ENCODE measurements at regions of chr15 and their contacts with region 1.

Region 1: GRCh38 chr15:58331903-58332675 is 99.7 kb upstream of the LIPC start:
- DNase-seq: peak in 6 of 9 donors; percentile 17 to 85 (median 42)
- ATAC-seq: peak; percentile 93
- H3K4me3 ChIP-seq: no peak overlapping the region
- H3K4me3 Mint-ChIP-seq: peak overlapping the region; percentile 27 to 66 (median 46)
- H3K27ac ChIP-seq: no peak overlapping the region
- H3K27ac Mint-ChIP-seq: peak overlapping the region; percentile 60 to 89 (median 80)
- H3K4me1 ChIP-seq: peaks cover 13 to 23% of the 10 kb centered on the region in 2 donors
- H3K4me1 Mint-ChIP-seq: peaks cover 26 to 48% (median 41%) of the 10 kb centered on the region in 7 donors
- H3K27me3 ChIP-seq: no peaks in the 10 kb centered on the region
- H3K27me3 Mint-ChIP-seq: no peaks in the 10 kb centered on the region

Region 2: GRCh38 chr15:57861036-57861638 is 471.0 kb before region 1 on chr15:
- CTCF ChIA-PET with region 1: no interaction called
- POLR2A ChIA-PET with region 1: no interaction called
- intact Hi-C with region 1: no loop called
- DNase-seq: peak in 7 of 9 donors; percentile 16 to 67 (median 53)
- ATAC-seq: peak; percentile 47
- H3K4me3 ChIP-seq: no peak overlapping the region
- H3K4me3 Mint-ChIP-seq: no peak overlapping the region
- H3K27ac ChIP-seq: no peak overlapping the region
- H3K27ac Mint-ChIP-seq: no peak overlapping the region
- H3K4me1 ChIP-seq: no peaks in the 10 kb centered on the region
- H3K4me1 Mint-ChIP-seq: peaks cover 0 to 9% (median 0%) of the 10 kb centered on the region in 7 donors
- H3K27me3 ChIP-seq: no peaks in the 10 kb centered on the region
- H3K27me3 Mint-ChIP-seq: peaks cover 8 to 68% (median 12%) of the 10 kb centered on the region in 5 donors

Region 3: GRCh38 chr15:57911247-57911646 is 420.8 kb before region 1 on chr15:
- CTCF ChIA-PET with region 1: no interaction called
- POLR2A ChIA-PET with region 1: no interaction called
- intact Hi-C with region 1: no loop called
- DNase-seq: no peak
- ATAC-seq: no peak
- H3K4me3 ChIP-seq: no peak overlapping the region
- H3K4me3 Mint-ChIP-seq: no peak overlapping the region
- H3K27ac ChIP-seq: no peak overlapping the region
- H3K27ac Mint-ChIP-seq: no peak overlapping the region
- H3K4me1 ChIP-seq: no peaks in the 10 kb centered on the region
- H3K4me1 Mint-ChIP-seq: no peaks in the 10 kb centered on the region
- H3K27me3 ChIP-seq: no peaks in the 10 kb centered on the region
- H3K27me3 Mint-ChIP-seq: peaks cover 17 to 37% (median 28%) of the 10 kb centered on the region in 5 donors

Region 4: GRCh38 chr15:58227706-58228543 is 104.2 kb before region 1 on chr15:
- CTCF ChIA-PET with region 1: no interaction called
- POLR2A ChIA-PET with region 1: no interaction called
- intact Hi-C with region 1: no loop called
- DNase-seq: peak; percentile 41 to 69 (median 61)
- ATAC-seq: peak; percentile 71
- H3K4me3 ChIP-seq: no peak overlapping the region
- H3K4me3 Mint-ChIP-seq: peak overlapping the region in 1 of 10 donors; percentile 40
- H3K27ac ChIP-seq: no peak overlapping the region
- H3K27ac Mint-ChIP-seq: no peak overlapping the region
- H3K4me1 ChIP-seq: no peaks in the 10 kb centered on the region
- H3K4me1 Mint-ChIP-seq: peaks cover 5 to 20% (median 17%) of the 10 kb centered on the region in 7 donors
- H3K27me3 ChIP-seq: no peaks in the 10 kb centered on the region
- H3K27me3 Mint-ChIP-seq: peaks cover 0 to 20% (median 9%) of the 10 kb centered on the region in 5 donors

Region 5: GRCh38 chr15:58307313-58307961 is 24.7 kb before region 1 on chr15:
- CTCF ChIA-PET with region 1: no interaction called
- POLR2A ChIA-PET with region 1: no interaction called
- intact Hi-C with region 1: no loop called
- DNase-seq: no peak
- ATAC-seq: no peak
- H3K4me3 ChIP-seq: no peak overlapping the region
- H3K4me3 Mint-ChIP-seq: no peak overlapping the region
- H3K27ac ChIP-seq: no peak overlapping the region
- H3K27ac Mint-ChIP-seq: peak overlapping the region in 1 of 9 donors; percentile 32
- H3K4me1 ChIP-seq: no peaks in the 10 kb centered on the region
- H3K4me1 Mint-ChIP-seq: peaks cover 8 to 51% (median 31%) of the 10 kb centered on the region in 7 donors
- H3K27me3 ChIP-seq: no peaks in the 10 kb centered on the region
- H3K27me3 Mint-ChIP-seq: no peaks in the 10 kb centered on the region

Region 6: GRCh38 chr15:58457381-58457965 is 125.4 kb after region 1 on chr15:
- CTCF ChIA-PET with region 1: no interaction called
- POLR2A ChIA-PET with region 1: no interaction called
- intact Hi-C with region 1: loop called in 1 of 2 experiments (anchors 5 kb)
- DNase-seq: no peak
- ATAC-seq: no peak
- H3K4me3 ChIP-seq: no peak overlapping the region
- H3K4me3 Mint-ChIP-seq: peak overlapping the region in 1 of 10 donors; percentile 47
- H3K27ac ChIP-seq: no peak overlapping the region
- H3K27ac Mint-ChIP-seq: peak overlapping the region in 2 of 9 donors; percentile 16 to 78
- H3K4me1 ChIP-seq: peaks cover 11 to 23% of the 10 kb centered on the region in 2 donors
- H3K4me1 Mint-ChIP-seq: peaks cover 19 to 75% (median 49%) of the 10 kb centered on the region in 7 donors
- H3K27me3 ChIP-seq: no peaks in the 10 kb centered on the region
- H3K27me3 Mint-ChIP-seq: no peaks in the 10 kb centered on the region

Region 7: DNA sequence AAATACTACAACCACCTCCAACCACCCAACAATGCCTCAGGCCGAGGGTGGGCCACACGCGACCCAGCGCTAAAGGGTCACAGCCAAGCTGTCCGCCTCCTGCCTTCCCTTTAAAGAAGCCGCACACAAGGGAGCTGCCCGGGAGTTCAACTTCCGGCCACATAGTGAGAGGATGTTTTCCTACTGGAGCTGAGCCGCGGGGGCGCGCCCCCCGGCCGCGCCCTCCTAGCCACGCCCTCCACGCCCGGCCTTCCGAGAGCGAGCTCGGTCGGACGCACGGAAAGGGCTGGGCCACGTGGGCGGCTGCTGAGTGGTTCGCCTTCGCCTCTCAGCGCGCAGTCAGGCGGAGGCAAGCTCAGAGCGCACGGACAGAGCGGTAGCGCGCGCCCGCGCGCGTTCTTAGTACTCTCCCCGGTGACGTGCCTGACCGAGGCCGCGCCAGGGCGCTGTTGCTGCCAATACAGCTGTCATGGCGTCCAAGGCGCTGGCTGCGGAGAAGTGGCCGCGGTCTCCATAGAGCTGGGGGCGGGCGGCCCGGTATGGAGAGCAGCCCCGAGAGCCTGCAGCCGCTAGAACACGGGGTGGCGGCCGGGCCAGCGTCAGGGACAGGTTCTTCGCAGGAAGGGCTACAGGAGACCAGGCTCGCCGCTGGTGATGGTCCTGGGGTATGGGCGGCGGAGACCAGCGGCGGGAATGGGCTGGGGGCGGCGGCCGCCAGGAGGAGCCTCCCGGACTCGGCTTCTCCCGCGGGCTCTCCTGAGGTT is 438.9 kb after region 1 on chr15 and contains the start of gene MINDY2:
- CTCF ChIA-PET with region 1: no interaction called
- POLR2A ChIA-PET with region 1: no interaction called
- intact Hi-C with region 1: loop called in 1 of 2 experiments (anchors 1 kb)
- DNase-seq: peak; percentile 85 to 92 (median 90)
- ATAC-seq: peak; percentile 98
- H3K4me3 ChIP-seq: peak within 1 kb of the TSS; percentile 83
- H3K4me3 Mint-ChIP-seq: peak within 1 kb of the TSS in 2 of 10 donors; percentile 2 to 20
- H3K27ac ChIP-seq: peak within 1 kb of the TSS; percentile 90
- H3K27ac Mint-ChIP-seq: peak within 1 kb of the TSS in 7 of 9 donors; percentile 86 to 96 (median 93)
- H3K4me1 ChIP-seq: peaks cover 24 to 32% of the 10 kb centered on the region in 2 donors
- H3K4me1 Mint-ChIP-seq: peaks cover 0 to 21% (median 9%) of the 10 kb centered on the region in 7 donors
- H3K27me3 ChIP-seq: no peaks in the 10 kb centered on the region
- H3K27me3 Mint-ChIP-seq: no peaks in the 10 kb centered on the region
- total RNA-seq, gene MINDY2: 10.4 to 16.6 (median 11.5) TPM